ENCODE measurements at regions of chrX and their contacts with region 1.

Region 1: DNA sequence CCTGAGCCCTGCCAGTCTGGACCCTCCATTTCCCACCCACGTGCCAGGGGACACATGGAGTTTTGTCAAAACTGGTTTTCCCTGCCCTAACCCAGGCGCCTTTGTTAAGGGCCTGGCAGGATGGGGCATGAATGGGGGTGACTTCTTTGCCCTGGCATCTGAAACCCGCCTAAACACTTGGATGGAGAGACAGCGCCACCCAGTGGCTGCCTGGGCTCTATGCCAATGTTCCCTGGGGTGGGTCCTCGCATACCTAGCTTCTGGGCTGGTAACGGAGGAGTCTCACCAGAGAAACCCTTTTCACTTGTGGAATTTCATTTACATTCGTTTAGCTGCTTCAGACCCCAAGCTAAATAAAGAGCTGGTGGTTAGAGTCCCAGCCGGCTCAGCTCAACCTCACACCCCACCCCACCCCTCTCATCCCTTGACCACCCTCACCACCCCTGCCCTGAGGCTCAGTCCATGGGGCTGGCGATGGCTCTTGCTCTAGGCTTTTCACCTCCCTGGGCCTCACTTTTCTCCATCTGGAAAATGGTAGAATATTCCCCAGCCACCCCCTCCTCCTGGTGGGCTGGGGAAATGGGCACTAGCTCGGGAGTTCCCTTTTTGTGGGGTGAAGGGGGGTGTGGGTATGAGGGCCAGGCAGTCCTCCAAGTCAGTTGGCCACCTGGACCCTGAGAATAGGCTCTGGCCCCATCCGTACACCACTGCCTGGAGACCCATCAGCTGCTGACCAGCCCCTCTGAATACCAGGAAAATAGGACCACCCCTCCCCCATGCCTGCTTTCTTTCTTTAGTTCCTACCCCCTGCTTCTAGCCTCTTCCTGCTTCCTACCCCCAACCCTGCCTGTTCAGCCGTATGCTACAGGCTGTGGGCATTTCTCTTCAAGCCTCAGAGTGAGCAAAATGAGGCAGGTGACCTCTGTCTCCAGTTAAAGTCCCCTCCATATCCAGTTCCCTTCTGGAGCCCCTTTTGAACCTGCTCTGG is 57.1 kb upstream of the PJA1 start:
- DNase-seq: peak; percentile 79
- H3K4me3 Mint-ChIP-seq: no peak overlapping the region
- H3K27ac Mint-ChIP-seq: no peak overlapping the region
- H3K4me1 Mint-ChIP-seq: no peaks in the 10 kb centered on the region
- H3K27me3 Mint-ChIP-seq: peaks cover 4% of the 10 kb centered on the region

Region 2: DNA sequence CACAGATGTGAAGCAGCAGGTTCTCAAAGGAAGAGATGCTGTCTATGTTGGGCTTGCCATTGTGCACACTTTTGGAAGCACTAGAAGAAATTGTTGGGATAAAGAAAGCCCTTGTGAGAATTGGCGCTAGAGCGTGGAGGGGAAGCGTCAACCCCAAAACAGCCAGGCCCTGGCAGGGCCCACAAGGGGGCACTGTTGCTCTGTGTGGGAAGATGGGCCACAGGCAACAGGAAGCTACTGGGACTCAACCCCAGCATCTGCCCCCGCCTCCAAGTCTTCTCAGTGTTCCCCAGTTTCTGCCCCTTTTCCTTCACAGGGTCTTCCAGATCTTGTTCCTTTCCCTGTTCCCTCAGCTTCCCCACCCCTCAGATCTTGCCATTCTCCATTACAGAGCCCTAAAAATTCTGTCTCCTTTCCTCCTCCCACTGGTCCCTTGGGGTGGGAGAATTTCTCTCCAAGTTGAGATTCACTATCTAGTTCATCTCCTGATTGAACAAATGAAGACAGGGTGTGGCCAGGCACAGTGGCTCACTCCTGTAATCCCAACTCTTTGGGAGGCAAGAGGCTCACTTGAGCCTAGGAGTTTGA is 489.4 kb before region 1 on chrX:
- CTCF ChIA-PET with region 1: interaction called, 13 read pairs
- DNase-seq: peak; percentile 74
- H3K4me3 Mint-ChIP-seq: no peak overlapping the region
- H3K27ac Mint-ChIP-seq: no peak overlapping the region
- H3K4me1 Mint-ChIP-seq: no peaks in the 10 kb centered on the region
- H3K27me3 Mint-ChIP-seq: peaks cover 9% of the 10 kb centered on the region

Region 3: GRCh38 chrX:68822641-68823410 is 399.6 kb before region 1 on chrX:
- CTCF ChIA-PET with region 1: interaction called, 24 read pairs
- DNase-seq: peak; percentile 32
- H3K4me3 Mint-ChIP-seq: no peak overlapping the region
- H3K27ac Mint-ChIP-seq: no peak overlapping the region
- H3K4me1 Mint-ChIP-seq: peaks cover 2% of the 10 kb centered on the region
- H3K27me3 Mint-ChIP-seq: peaks cover 13% of the 10 kb centered on the region

Region 4: GRCh38 chrX:68828740-68829552 is 393.5 kb before region 1 on chrX and contains the start of gene EFNB1:
- CTCF ChIA-PET with region 1: interaction called, 24 read pairs
- DNase-seq: peak; percentile 90
- H3K4me3 Mint-ChIP-seq: peak within 1 kb of the TSS; percentile 76
- H3K27ac Mint-ChIP-seq: peak within 1 kb of the TSS; percentile 81
- H3K4me1 Mint-ChIP-seq: peaks cover 23% of the 10 kb centered on the region
- H3K27me3 Mint-ChIP-seq: peaks cover 35% of the 10 kb centered on the region

Region 5: DNA sequence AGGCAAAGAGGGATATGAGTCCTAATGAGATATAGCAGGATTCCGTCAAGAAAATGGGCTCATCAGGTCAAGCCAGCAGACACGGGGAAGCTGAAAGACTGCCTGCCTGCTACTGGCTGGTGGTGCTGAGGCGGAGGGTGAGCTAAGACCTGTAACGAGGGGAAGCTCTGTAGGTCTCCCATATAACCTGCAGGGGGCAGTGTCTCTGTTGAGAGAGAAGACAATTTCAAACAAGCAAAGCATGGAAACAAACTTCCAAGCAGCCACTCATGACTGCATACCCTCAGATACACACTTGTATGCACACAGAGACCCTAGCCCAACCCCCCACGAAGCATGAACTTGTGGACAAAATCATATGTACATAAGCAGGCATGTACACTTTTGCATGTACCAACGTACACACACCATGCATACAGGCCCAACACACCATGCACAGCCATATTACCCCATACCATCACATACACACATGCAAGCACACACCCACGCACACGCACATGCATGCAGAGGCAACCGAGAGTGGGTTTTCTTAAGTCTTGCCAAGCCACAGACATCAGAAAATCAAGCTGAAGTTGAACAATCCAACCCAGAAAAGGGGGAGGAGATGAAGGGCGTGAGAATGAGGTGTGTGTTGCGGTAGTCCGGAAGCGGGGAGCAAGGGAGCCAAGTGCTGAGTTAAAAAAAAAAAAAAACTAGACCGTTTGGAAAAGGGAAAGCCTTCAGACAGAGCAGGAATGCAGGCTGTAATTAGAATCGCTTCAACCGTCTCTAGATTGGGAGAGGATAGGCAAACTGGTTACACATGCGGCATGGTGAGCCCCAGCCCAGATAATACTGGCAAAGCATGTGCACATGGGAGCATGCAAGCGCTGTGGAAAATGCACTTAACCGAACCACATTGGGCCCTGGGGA is 128.2 kb before region 1 on chrX:
- CTCF ChIA-PET with region 1: interaction called, 15 read pairs
- DNase-seq: peak; percentile 49
- H3K4me3 Mint-ChIP-seq: no peak overlapping the region
- H3K27ac Mint-ChIP-seq: no peak overlapping the region
- H3K4me1 Mint-ChIP-seq: no peaks in the 10 kb centered on the region
- H3K27me3 Mint-ChIP-seq: no peaks in the 10 kb centered on the region

Region 6: GRCh38 chrX:69203591-69203990 is 18.8 kb before region 1 on chrX:
- CTCF ChIA-PET with region 1: no interaction called
- DNase-seq: no peak
- H3K4me3 Mint-ChIP-seq: no peak overlapping the region
- H3K27ac Mint-ChIP-seq: no peak overlapping the region
- H3K4me1 Mint-ChIP-seq: no peaks in the 10 kb centered on the region
- H3K27me3 Mint-ChIP-seq: no peaks in the 10 kb centered on the region

Measured in activated naive CD4-positive, alpha-beta T cell treated with anti-CD3 and anti-CD28 coated beads, Interleukin-2, amount 10 ng/mL, durations not matched to agents 7 days and 5 days (primary cell).